Activated CD8-positive, alpha-beta memory T cell treated with anti-CD3 and anti-CD28 coated beads, Interleukin-2, amount 10 ng/mL, durations not matched to agents 7 days and 5 days (primary cell): ENCODE measurements at regions of chr6 and their contacts with region 1.

Region 1: GRCh38 chr6:13795041-13795750 is 19.2 kb downstream of the MCUR1 start:
- DNase-seq: peak; percentile 93
- ATAC-seq: peak; percentile 96
- H3K4me3 Mint-ChIP-seq: no peak overlapping the region
- H3K27ac Mint-ChIP-seq: peak overlapping the region; percentile 60
- H3K4me1 Mint-ChIP-seq: peaks cover 33% of the 10 kb centered on the region
- H3K27me3 Mint-ChIP-seq: no peaks in the 10 kb centered on the region

Region 2: DNA sequence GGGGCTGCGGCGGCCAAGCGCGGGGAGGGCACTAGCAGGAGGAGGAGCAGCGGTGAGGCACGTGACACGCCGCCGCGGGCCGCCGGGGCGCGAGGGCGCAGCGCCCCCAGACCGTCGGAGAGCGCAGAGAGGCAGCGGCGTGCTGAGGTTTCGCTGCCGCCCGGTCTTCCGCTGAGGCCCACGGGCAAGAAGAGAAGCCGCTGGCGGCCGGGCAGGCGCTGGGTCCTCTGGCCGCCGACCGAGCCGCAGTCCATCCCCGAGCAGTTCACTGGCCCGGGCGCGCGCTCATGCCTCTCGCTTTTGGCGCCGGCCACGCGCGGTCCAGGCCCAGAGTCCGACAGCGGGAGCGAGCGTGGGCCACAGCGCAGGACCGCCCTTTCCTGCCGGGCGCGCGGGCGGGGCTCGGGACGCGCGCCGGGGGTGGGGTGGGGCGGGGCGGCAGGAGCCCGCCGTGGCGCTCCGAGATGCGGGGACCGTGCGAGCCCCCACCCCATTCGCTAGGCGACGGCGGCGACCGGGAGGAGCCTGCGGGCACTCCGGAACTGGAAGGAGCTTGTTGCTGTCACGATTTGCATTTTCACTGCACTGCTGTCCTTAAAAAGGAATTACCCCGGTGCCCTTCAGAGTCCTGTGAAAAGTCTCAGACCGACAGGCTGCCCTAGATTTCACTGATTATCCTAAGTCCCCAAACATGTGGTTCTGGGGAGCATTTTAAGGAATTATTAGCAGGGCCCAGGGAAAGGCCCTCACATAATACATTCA is 19.2 kb after region 1 on chr6 and contains the start of gene MCUR1:
- CTCF ChIA-PET with region 1: interaction called, 22 read pairs
- DNase-seq: peak; percentile 89
- ATAC-seq: peak; percentile 87
- H3K4me3 Mint-ChIP-seq: peak within 1 kb of the TSS; percentile 86
- H3K27ac Mint-ChIP-seq: peak within 1 kb of the TSS; percentile 82
- H3K4me1 Mint-ChIP-seq: peaks cover 24% of the 10 kb centered on the region
- H3K27me3 Mint-ChIP-seq: peaks cover 4% of the 10 kb centered on the region
- total RNA-seq, gene MCUR1: 27.7 to 31.1 TPM

Region 3: DNA sequence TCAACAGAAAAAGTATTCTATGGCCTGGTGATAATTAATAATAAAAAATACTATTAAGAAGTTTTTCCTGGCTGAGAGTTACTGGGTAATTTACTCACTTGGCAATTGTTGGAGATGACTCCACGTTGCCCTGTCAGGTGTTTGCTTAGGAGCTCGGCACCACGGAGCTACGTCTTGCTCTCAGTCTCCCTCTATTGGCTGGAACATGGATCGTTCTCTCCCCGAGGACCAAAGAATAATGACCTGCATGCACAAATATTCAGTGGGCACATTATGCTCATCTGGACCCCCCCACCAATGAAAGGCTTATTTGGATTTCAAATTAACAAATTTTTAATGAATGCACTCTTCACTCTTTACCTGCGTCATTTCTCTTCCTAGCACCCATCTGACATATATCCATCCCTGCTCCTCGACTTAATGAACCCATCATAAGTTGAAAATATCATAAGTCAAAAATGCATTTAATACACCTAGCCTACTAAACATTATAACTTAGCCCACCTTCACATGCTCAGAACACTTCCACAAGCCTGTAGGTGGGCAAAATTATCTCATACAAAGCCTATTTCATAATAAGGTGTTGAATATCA is 251.4 kb after region 1 on chr6:
- CTCF ChIA-PET with region 1: interaction called, 15 read pairs
- DNase-seq: peak; percentile 61
- ATAC-seq: peak; percentile 72
- H3K4me3 Mint-ChIP-seq: no peak overlapping the region
- H3K27ac Mint-ChIP-seq: no peak overlapping the region
- H3K4me1 Mint-ChIP-seq: no peaks in the 10 kb centered on the region
- H3K27me3 Mint-ChIP-seq: peaks cover 45% of the 10 kb centered on the region